Dorsolateral prefrontal cortex (tissue), 120 donors: ENCODE measurements at regions of chr7 and their contacts with region 1.

Region 1: DNA sequence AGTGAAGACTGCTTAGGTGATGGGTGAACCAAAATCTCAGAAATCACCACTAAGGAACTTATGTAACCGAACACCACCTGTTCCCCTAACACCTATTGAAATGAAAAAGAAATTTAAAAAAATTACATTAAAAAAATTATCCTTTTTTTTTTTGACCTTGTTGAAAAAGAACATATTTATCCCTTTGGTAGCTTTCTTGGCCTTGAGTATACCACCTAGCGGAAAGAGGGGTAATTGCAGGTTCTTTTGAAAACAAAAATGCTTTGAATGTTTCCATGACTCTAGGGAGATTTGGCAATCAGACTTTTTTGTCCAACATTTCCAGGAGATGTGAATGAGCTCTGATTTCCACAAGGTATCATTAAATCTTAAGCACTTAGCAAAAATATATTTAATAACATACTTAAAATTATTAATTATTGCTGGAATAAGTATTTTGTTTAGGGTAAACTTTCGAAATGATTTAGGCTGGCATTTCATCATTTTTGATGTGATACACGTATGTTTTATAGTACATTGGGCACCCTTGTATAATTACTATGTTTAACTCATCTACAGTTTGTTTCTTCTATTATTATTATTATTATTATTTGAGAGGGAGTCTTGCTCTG is 47.0 kb upstream of the ELMO1 start:
- DNase-seq: no peak
- H3K4me3 ChIP-seq: no peak overlapping the region
- H3K27ac ChIP-seq: peak overlapping the region in 39 of 59 donors; percentile 2 to 96 (median 87)
- H3K27me3 ChIP-seq: no peaks in the 10 kb centered on the region
- CTCF ChIP-seq: peak; percentile 60 to 90 (median 77)

Region 2: GRCh38 chr7:37208528-37208927 is 287.2 kb before region 1 on chr7:
- intact Hi-C with region 1: loop called in 1 of 2 experiments (anchors 5 kb)
- DNase-seq: peak in 9 of 10 donors; percentile 24 to 76 (median 66)
- H3K4me3 ChIP-seq: peak overlapping the region in 1 of 59 donors; percentile 4
- H3K27ac ChIP-seq: peak overlapping the region; percentile 2 to 95 (median 84)
- H3K27me3 ChIP-seq: no peaks in the 10 kb centered on the region
- CTCF ChIP-seq: peak; percentile 47 to 88 (median 75)

Region 3: DNA sequence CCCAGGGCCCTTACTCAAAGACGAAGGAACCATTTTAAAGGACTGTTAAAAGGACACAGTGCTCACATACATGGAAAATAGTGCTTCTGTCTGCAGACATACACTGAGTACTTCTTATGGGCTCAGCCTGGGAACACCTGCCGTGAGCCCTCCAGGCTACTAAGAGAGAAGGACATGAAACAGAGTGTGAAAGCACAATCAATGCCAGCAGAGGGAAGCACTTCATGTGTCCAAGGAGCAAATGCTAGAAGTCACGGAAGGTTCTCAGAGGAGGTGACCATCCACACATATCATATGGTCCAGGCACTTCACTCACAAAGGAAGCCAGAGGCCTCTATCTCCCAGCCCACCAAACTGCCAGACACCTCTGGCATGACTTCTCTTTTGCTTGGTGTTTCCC is 62.5 kb before region 1 on chr7:
- intact Hi-C with region 1: no loop called
- DNase-seq: no peak
- H3K4me3 ChIP-seq: no peak overlapping the region
- H3K27ac ChIP-seq: peak overlapping the region in 34 of 59 donors; percentile 0 to 79 (median 44)
- H3K27me3 ChIP-seq: peaks cover 0 to 12% (median 0%) of the 10 kb centered on the region in 45 donors
- CTCF ChIP-seq: peak in 16 of 56 donors; percentile 9 to 38 (median 29)

Region 4: DNA sequence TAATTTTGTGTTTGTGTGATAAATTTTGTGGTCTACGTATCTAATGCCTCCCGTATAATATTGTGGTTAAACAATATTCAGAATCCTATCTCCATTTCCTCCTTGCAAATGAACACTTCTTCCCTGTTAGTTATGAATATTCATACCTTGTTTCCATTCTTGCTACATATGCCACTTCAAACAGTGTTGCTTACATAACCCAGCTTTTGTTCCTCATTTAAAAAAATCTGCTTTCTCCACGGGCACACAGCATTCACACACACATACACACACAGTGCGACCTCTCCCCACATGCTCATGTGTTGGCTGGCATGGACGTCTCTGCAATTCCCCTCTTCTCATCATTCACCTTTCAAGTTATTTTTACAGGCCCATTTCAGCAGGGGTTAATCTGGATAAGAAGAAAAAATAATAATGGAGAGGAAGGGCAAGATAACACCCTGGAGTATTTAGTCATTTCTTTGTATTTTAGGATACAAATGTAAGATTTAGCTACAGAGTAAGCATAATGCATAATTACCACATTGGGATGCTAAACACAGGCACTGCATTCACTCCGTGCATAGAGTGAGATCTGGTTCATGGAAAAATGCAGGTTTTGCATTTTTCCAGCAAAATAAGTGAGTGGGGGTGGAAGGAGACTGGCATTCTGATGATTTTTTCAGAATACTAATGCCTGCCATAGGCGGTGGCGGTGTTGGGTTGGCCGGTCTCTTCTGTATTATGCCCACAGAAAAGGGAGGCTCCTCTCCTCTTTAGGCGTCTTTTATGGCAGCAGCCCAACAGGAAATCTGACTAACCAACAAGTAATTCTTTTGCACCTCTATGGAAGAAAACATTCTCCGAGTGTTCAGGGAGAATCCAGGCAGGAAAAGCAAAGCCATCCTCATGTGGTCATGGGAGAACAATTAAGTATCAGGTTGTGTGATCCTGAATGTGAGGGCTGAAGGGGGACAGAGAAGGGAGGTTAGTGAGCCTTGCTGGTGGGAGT is 15.3 kb before region 1 on chr7:
- intact Hi-C with region 1: no loop called
- DNase-seq: peak in 1 of 10 donors; percentile 28
- H3K4me3 ChIP-seq: peak overlapping the region in 6 of 59 donors; percentile 0 to 15 (median 10)
- H3K27ac ChIP-seq: peak overlapping the region in 58 of 59 donors; percentile 34 to 98 (median 90)
- H3K27me3 ChIP-seq: no peaks in the 10 kb centered on the region
- CTCF ChIP-seq: no peak

Region 5: GRCh38 chr7:38222481-38223096 is 726.9 kb after region 1 on chr7:
- intact Hi-C with region 1: no loop called
- DNase-seq: peak in 1 of 10 donors; percentile 36
- H3K4me3 ChIP-seq: no peak overlapping the region
- H3K27ac ChIP-seq: peak overlapping the region in 3 of 59 donors; percentile 4 to 29 (median 25)
- H3K27me3 ChIP-seq: no peaks in the 10 kb centered on the region
- CTCF ChIP-seq: peak; percentile 73 to 95 (median 88)